ENCODE measurements at regions of chr17 and their contacts with region 1.

Region 1: DNA sequence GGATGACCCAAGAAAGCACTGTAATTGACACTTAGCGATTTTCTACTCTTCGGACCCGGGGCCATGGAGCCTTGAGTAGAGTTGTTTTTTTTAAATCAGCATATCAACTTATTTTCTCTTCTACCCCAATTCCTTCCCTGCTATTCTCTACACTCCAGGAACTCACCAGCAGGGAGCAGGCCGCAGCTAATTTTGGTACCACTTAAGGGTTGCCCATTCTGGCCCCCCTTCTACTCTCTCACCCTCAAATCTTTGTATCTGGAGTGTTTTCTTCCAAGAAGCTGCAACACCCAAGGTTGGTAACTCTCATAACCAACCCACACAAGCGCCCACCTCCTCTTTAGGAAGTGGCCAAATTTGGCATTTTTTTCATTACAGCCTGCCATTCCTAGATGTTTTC is 5.5 kb upstream of the ERAL1 start:
- H3K4me3 ChIP-seq: no peak overlapping the region
- H3K27ac ChIP-seq: no peak overlapping the region
- H3K4me1 ChIP-seq: no peaks in the 10 kb centered on the region
- CTCF ChIP-seq: no peak

Region 2: DNA sequence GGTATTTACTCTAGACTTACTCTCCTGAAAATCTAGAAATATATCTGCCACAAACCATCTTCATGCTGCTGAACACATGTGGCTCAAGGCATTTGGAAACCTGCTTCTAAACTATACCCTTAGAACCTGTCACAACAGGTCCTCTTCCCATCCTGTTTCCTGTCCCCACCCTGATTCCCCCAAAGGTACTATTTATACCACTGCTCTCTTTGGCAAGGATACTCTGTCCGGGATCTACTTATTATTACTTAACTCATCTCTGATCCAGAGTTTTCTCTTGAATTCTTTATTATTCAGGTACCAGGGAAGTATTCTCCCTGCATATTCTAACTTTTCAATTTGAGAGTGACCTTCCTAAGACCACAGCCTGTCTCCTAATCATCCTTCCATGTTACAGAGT is 72.1 kb before region 1 on chr17:
- CTCF ChIA-PET with region 1: interaction called, 12 read pairs
- POLR2A ChIA-PET with region 1: no interaction called
- H3K4me3 ChIP-seq: no peak overlapping the region
- H3K27ac ChIP-seq: 0 out of 2 replicates have a peak overlapping the region, but pooled peaks have one; percentile 14
- H3K4me1 ChIP-seq: 0 out of 2 replicates have a peak, but pooled peaks cover 4% of the 10 kb centered on the region
- CTCF ChIP-seq: no peak

Region 3: GRCh38 chr17:28878981-28879380 is 29.7 kb after region 1 on chr17:
- CTCF ChIA-PET with region 1: interaction called, 11 read pairs
- POLR2A ChIA-PET with region 1: no interaction called
- H3K4me3 ChIP-seq: no peak overlapping the region
- H3K27ac ChIP-seq: no peak overlapping the region
- H3K4me1 ChIP-seq: no peaks in the 10 kb centered on the region
- CTCF ChIP-seq: peak; percentile 65

Measured in HEK293 (cell line).